ENCODE measurements at regions of chr9 and their contacts with region 1.

Region 1: DNA sequence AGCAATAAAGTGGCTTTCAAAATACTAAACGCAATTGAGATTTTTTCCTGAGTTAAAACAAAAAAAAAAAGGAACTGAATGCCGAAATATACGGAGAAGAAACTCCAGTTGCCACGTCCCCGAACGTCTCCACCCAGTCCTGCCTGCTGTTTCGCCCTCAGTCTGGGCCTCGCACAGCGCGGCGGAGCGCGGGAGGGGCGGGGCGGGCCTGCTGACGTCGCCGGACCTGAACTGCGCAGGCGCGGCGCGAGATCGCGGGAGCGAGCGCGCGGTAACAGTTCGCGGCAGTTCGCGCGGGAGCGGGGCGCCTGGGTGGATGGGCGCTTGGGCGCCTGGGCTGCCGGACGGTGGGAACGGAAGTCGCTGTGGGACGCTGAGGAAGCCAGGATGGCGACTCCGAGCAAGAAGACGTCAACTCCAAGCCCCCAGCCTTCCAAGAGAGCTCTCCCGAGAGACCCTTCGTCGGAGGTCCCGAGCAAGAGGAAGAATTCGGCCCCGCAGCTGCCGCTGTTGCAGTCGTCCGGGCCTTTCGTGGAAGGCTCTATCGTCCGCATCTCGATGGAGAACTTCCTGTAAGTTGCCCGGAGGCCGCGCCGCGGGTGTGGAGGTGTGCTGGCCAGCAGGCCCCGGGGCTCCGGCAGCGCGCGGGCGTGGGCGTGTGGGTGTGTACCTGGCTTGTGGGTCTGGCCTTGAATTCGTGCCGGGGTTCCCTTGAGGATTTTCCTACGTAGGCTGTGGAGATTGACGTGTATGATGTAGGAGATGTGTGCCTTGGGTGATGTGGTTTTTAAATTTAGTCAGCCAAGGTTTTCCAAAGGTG is at the start of gene SMC5:
- DNase-seq: peak; percentile 92
- H3K4me3 Mint-ChIP-seq: peak within 1 kb of the TSS; percentile 95
- H3K27ac Mint-ChIP-seq: peak within 1 kb of the TSS; percentile 88
- H3K4me1 Mint-ChIP-seq: peaks cover 47% of the 10 kb centered on the region
- H3K27me3 Mint-ChIP-seq: no peaks in the 10 kb centered on the region
- total RNA-seq, gene SMC5: 32.0 to 34.1 TPM

Region 2: DNA sequence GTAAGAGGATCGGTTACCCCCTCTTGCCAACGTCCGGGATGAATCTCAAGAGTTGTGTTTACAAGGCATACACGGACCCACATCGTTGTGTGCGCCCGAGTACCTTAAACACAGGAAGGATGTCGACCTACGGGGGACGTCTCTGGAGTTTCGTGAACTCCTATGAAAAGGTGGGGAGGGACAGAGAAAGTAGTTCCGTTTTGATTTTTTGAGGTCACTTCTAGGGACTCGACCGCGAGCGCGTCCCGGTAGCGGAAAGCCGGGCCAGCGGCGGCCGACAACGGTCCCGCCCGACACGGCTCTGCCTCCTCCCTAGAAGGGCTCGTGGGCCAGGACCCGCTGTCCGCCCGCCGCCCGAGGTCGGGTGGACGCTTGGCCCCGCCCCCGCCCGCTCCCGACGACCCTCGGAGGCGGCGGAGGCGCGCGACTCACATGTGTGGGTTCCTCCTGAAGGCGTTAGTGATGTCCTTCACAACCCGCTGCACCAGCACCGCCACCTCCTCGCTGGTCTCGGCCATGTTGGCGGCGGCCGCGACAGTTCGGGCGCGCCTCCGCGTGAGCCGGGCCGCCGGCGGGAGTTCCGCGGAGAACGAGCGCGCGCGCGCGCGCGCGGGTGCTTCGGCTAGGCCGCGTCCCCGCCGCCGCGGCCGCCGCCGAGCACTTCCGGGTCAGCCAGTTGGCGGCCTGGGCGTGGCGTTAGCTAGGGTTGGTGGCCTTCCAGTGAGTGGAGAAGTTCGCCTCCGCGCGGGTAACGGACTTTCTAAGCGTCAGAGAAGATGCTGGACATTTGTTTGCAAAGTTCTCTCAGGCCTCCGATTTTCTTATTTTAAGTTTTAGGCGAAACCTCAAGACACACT is 499.3 kb before region 1 on chr9 and contains the start of gene PTAR1:
- CTCF ChIA-PET with region 1: no interaction called
- POLR2A ChIA-PET with region 1: no interaction called
- intact Hi-C with region 1: loop called (anchors 1 kb)
- DNase-seq: peak; percentile 93
- H3K4me3 Mint-ChIP-seq: peak within 1 kb of the TSS; percentile 92
- H3K27ac Mint-ChIP-seq: peak within 1 kb of the TSS; percentile 89
- H3K4me1 Mint-ChIP-seq: peaks cover 27% of the 10 kb centered on the region
- H3K27me3 Mint-ChIP-seq: no peaks in the 10 kb centered on the region
- total RNA-seq, gene PTAR1: 37.0 to 37.3 TPM

Region 3: GRCh38 chr9:70165006-70165602 is 93.8 kb before region 1 on chr9:
- CTCF ChIA-PET with region 1: no interaction called
- POLR2A ChIA-PET with region 1: no interaction called
- intact Hi-C with region 1: no loop called
- DNase-seq: no peak
- H3K4me3 Mint-ChIP-seq: no peak overlapping the region
- H3K27ac Mint-ChIP-seq: no peak overlapping the region
- H3K4me1 Mint-ChIP-seq: no peaks in the 10 kb centered on the region
- H3K27me3 Mint-ChIP-seq: no peaks in the 10 kb centered on the region

Region 4: DNA sequence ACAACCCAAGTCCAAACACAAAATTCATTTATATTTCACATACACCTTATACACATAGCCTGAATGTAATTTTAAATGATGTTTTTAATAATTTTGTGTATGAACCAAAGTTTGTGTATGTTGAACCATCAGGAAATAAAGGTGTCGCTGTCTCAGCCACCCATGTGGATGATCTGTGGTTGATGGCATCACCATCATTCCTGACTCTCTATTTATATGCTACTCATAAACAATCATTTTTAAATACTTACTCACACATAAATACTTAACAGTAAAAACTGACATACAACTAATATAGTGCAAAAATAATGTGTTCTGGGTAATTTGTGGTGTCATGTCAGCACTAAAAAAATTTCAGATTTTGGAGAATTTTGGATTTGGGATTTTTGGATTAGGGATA is 38.2 kb after region 1 on chr9:
- CTCF ChIA-PET with region 1: no interaction called
- POLR2A ChIA-PET with region 1: no interaction called
- intact Hi-C with region 1: loop called (anchors 5 kb)
- DNase-seq: no peak
- H3K4me3 Mint-ChIP-seq: no peak overlapping the region
- H3K27ac Mint-ChIP-seq: no peak overlapping the region
- H3K4me1 Mint-ChIP-seq: peaks cover 22% of the 10 kb centered on the region
- H3K27me3 Mint-ChIP-seq: no peaks in the 10 kb centered on the region

Region 5: DNA sequence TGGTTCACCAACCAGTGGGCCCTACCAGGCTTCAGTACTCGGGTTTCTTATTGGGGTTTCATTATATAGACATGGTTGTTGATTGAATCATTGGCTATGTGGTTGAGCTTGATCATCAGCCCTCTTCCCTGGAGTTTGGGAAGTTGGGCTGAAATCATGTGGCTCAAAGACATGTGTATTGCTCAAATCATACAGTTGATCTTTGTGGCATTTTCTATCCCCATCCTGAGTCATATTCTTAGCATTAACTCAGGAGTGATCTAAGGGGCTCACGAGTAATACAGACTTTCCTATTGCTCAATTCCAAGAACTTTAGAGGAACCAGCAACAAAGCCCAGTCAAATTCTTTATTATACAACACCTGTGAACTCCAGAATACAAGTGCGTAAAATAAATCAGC is 66.1 kb after region 1 on chr9:
- CTCF ChIA-PET with region 1: no interaction called
- POLR2A ChIA-PET with region 1: no interaction called
- intact Hi-C with region 1: no loop called
- DNase-seq: no peak
- H3K4me3 Mint-ChIP-seq: no peak overlapping the region
- H3K27ac Mint-ChIP-seq: no peak overlapping the region
- H3K4me1 Mint-ChIP-seq: no peaks in the 10 kb centered on the region
- H3K27me3 Mint-ChIP-seq: no peaks in the 10 kb centered on the region

Region 6: GRCh38 chr9:70413798-70414775 is 155.2 kb after region 1 on chr9 and contains the start of gene KLF9:
- CTCF ChIA-PET with region 1: no interaction called
- POLR2A ChIA-PET with region 1: interaction called, 4 read pairs
- intact Hi-C with region 1: loop called (anchors 2 kb)
- DNase-seq: peak; percentile 96
- H3K4me3 Mint-ChIP-seq: peak within 1 kb of the TSS; percentile 97
- H3K27ac Mint-ChIP-seq: peak within 1 kb of the TSS; percentile 100
- H3K4me1 Mint-ChIP-seq: peaks cover 37% of the 10 kb centered on the region
- H3K27me3 Mint-ChIP-seq: peaks cover 2% of the 10 kb centered on the region
- total RNA-seq, gene KLF9: 23.7 to 24.5 TPM

Region 7: DNA sequence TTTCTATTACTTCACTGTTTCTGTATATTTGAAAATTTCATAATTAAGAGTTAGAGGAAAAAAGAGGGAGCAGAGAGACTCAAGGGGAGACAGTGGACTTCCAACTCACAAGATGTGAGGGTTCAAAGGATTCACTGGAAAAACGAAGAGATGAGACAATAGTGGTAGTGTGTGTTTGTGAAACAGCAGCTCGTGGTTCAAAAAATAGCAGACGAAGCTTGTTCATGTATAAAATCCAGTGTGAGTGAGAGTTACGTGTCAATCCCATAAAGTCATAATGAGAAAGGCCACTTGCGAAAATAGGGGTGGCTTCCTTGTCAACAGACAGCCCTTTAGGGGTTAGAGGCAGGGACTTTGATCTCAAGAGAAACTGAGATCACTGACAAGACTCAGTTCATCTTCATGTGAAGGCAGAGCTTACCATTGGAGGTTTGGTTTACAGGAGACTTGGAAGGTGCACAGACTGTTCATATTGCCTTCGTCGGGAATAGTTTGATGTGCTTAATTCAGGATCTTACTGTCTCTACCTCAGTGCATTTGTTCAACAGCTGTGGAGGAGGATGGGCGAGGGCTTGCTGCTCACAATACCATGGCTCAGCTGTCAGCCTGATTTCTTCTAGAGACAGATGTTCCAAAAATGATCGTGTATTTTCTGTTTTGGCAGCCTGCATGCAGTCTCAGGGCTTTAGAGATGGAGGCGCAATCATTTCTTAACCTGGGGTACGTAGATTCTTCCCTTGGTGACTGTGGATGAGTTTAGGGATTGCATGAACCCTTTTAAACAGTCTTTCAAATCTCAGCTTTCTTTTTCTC is 261.2 kb after region 1 on chr9:
- CTCF ChIA-PET with region 1: no interaction called
- POLR2A ChIA-PET with region 1: no interaction called
- intact Hi-C with region 1: loop called (anchors 5 kb)
- DNase-seq: peak; percentile 31
- H3K4me3 Mint-ChIP-seq: peak overlapping the region; percentile 58
- H3K27ac Mint-ChIP-seq: peak overlapping the region; percentile 88
- H3K4me1 Mint-ChIP-seq: peaks cover 30% of the 10 kb centered on the region
- H3K27me3 Mint-ChIP-seq: peaks cover 1% of the 10 kb centered on the region